ENCODE measurements at regions of chr10 and their contacts with region 1.

Region 1: DNA sequence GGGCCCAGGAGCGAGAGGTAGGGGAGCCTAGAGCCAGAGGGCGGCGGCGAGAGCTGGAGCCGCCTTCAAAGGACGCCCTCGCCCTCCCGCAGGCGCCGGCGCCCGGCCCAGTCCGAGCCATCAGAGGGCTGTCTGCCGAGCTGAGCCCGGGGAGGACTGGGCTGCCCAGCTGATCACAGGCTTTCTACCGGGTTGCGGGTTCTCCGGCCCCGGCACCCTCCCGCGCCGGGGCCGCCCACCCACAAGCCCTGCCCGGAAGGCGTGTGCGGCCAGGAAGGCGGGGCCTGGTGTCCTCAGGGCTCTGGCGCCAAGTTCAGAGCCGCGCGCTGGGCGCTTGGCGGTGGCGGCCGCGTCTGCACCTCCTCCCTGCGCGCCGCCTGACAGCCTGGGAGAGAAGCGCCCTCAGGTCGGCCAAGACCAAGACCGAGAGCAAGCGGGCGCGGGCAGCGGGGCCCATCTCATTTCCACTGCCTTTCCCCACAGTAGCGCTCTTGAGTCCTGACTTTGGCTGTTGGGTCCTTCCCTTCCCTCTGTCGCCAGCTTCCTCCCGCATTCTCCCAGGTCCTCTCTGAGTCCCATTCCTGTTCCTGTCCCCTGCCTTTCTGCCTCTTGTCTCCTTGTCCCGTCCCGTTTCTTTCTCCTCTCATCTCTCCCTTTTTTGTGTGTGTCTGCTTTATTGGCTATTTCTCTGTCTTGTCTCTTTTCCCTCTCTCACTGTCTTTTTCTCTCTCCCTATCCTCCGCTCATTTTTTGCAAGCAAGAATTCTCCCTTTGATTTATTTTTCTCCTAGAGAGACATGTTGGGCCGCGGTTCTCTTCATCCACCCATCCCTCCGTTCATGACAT is 60.6 kb upstream of the MSMB start:
- DNase-seq: no peak
- ATAC-seq: peak; percentile 96
- H3K4me3 ChIP-seq: peak overlapping the region; percentile 60; the same call in 1 of the 2 replicates
- H3K27ac ChIP-seq: no peak overlapping the region
- H3K4me1 ChIP-seq: no peaks in the 10 kb centered on the region
- H3K27me3 ChIP-seq: peaks cover 0 to 5% of the 10 kb centered on the region in 2 experiments; a peak in 1 of 4 replicates
- CTCF ChIP-seq: no peak
- EP300 ChIP-seq: no peak
- POLR2A ChIP-seq: no peak
- RAD21 ChIP-seq: no peak

Region 2: GRCh38 chr10:45495438-45496152 is 611.0 kb before region 1 on chr10:
- CTCF ChIA-PET with region 1: no interaction called
- POLR2A ChIA-PET with region 1: no interaction called
- RAD21 ChIA-PET with region 1: no interaction called
- SMC1A ChIA-PET with region 1: no interaction called
- in situ Hi-C with region 1: no loop called
- intact Hi-C with region 1: no loop called
- DNase-seq: no peak
- ATAC-seq: no peak
- H3K4me3 ChIP-seq: no peak overlapping the region
- H3K27ac ChIP-seq: no peak overlapping the region
- H3K4me1 ChIP-seq: no peaks in the 10 kb centered on the region
- H3K27me3 ChIP-seq: no peaks in the 10 kb centered on the region
- CTCF ChIP-seq: no peak
- EP300 ChIP-seq: no peak
- POLR2A ChIP-seq: no peak
- RAD21 ChIP-seq: no peak

Region 3: GRCh38 chr10:46198516-46198915 is 91.9 kb after region 1 on chr10:
- CTCF ChIA-PET with region 1: no interaction called
- POLR2A ChIA-PET with region 1: no interaction called
- RAD21 ChIA-PET with region 1: no interaction called
- SMC1A ChIA-PET with region 1: no interaction called
- in situ Hi-C with region 1: no loop called
- intact Hi-C with region 1: no loop called
- DNase-seq: no peak
- ATAC-seq: no peak
- H3K4me3 ChIP-seq: no peak overlapping the region
- H3K27ac ChIP-seq: no peak overlapping the region
- H3K4me1 ChIP-seq: no peaks in the 10 kb centered on the region
- H3K27me3 ChIP-seq: no peaks in the 10 kb centered on the region
- CTCF ChIP-seq: no peak
- EP300 ChIP-seq: no peak
- POLR2A ChIP-seq: no peak
- RAD21 ChIP-seq: no peak

Region 4: GRCh38 chr10:46284293-46285229 is 177.9 kb after region 1 on chr10:
- CTCF ChIA-PET with region 1: no interaction called
- POLR2A ChIA-PET with region 1: no interaction called
- RAD21 ChIA-PET with region 1: no interaction called
- SMC1A ChIA-PET with region 1: no interaction called
- in situ Hi-C with region 1: loop called (anchors 5 kb)
- intact Hi-C with region 1: no loop called
- DNase-seq: no peak
- ATAC-seq: peak; percentile 97
- H3K4me3 ChIP-seq: peak overlapping the region; percentile 61
- H3K27ac ChIP-seq: no peak overlapping the region
- H3K4me1 ChIP-seq: peaks cover 2% of the 10 kb centered on the region; the same call in 1 of the 2 replicates
- H3K27me3 ChIP-seq: peaks cover 0 to 9% of the 10 kb centered on the region in 2 experiments; a peak in 3 of 4 replicates
- CTCF ChIP-seq: no peak
- EP300 ChIP-seq: no peak
- POLR2A ChIP-seq: peak; percentile 62; the same call in 1 of the 2 replicates
- RAD21 ChIP-seq: no peak